ENCODE measurements at regions of chr4 and their contacts with region 1.

Region 1: GRCh38 chr4:40309250-40309774 is 25.8 kb upstream of the CHRNA9 start:
- DNase-seq: peak; percentile 92
- ATAC-seq: peak; percentile 85

Region 2: GRCh38 chr4:39469429-39470077 is 839.8 kb before region 1 on chr4:
- intact Hi-C with region 1: loop called (anchors 5 kb)
- DNase-seq: no peak
- ATAC-seq: peak; percentile 80

Region 3: GRCh38 chr4:40056716-40057585 is 252.4 kb before region 1 on chr4 and contains the start of gene N4BP2:
- intact Hi-C with region 1: loop called (anchors 2 kb)
- DNase-seq: peak; percentile 94
- ATAC-seq: peak; percentile 86
- total RNA-seq, gene N4BP2: 4.1 TPM

Region 4: GRCh38 chr4:40149960-40150385 is 159.3 kb before region 1 on chr4:
- intact Hi-C with region 1: loop called (anchors 1 kb)
- DNase-seq: no peak
- ATAC-seq: peak; percentile 54